Heart right ventricle (tissue), 16 donors: ENCODE measurements at regions of chr17 and their contacts with region 1.

Region 1: GRCh38 chr17:19664136-19664820 is 15.7 kb downstream of the ALDH3A2 start:
- DNase-seq: peak in 1 of 2 donors; percentile 72
- ATAC-seq: peak; percentile 77 to 98 (median 92)
- H3K4me3 ChIP-seq: no peak overlapping the region
- H3K27ac ChIP-seq: peak overlapping the region in 6 of 10 donors; percentile 13 to 64 (median 50)
- H3K4me1 ChIP-seq: peaks cover 0 to 24% (median 10%) of the 10 kb centered on the region in 9 donors
- H3K27me3 ChIP-seq: no peaks in the 10 kb centered on the region
- CTCF ChIP-seq: no peak

Region 2: GRCh38 chr17:19569785-19570543 is 94.3 kb before region 1 on chr17:
- intact Hi-C with region 1: no loop called
- DNase-seq: no peak
- ATAC-seq: no peak
- H3K4me3 ChIP-seq: no peak overlapping the region
- H3K27ac ChIP-seq: no peak overlapping the region
- H3K4me1 ChIP-seq: peaks cover 0 to 6% (median 0%) of the 10 kb centered on the region in 9 donors
- H3K27me3 ChIP-seq: no peaks in the 10 kb centered on the region
- CTCF ChIP-seq: no peak

Region 3: DNA sequence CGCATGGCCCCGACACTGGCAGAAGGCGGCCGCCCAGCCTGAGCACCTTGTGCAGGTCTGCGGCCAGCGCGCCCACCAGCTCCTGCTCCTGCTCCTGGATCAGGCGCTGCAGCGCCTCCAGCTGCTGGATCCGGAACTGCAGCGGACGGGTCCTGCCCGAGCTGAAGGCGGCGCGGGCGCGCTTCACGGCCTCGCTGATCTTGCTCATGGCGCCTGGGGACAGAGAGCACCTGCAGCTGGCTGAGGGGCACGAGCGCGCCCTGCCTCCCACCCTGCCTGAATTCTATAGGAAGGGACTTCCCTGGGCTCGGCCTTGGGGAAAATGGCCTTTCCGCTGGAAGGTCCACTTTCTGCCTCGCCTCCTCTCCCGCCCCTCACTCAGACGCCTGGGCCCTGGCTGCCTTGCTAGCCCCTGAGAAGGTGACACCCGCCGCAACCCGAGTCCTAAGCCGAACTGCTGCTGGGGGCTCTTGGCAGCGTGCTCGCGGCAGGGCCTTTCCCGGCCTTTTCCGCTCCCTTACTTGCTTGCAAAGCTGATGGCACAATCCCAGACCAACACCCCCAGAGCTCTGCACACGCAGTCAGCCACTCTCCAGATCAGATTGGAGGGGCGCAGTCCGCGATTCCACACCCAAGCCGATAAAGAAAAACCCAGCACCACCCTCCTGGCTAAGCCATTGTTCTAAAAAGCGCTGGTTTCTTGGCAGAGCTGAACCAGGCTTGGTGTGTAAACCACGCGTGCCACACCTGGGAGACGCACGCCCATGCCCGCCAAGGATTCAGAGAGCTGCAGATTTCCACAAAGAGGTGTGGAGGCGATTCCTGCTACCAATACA is 80.9 kb after region 1 on chr17:
- intact Hi-C with region 1: loop called in 1 of 10 experiments (anchors 10 kb)
- DNase-seq: peak; percentile 90 to 93
- ATAC-seq: peak; percentile 80 to 95 (median 90)
- H3K4me3 ChIP-seq: peak overlapping the region; percentile 38 to 63 (median 58)
- H3K27ac ChIP-seq: peak overlapping the region in 7 of 10 donors; percentile 11 to 54 (median 36)
- H3K4me1 ChIP-seq: peaks cover 0 to 13% (median 9%) of the 10 kb centered on the region in 9 donors
- H3K27me3 ChIP-seq: no peaks in the 10 kb centered on the region
- CTCF ChIP-seq: peak; percentile 79 to 98 (median 94)